ENCODE measurements at regions of chr11 and their contacts with region 1.

Region 1: DNA sequence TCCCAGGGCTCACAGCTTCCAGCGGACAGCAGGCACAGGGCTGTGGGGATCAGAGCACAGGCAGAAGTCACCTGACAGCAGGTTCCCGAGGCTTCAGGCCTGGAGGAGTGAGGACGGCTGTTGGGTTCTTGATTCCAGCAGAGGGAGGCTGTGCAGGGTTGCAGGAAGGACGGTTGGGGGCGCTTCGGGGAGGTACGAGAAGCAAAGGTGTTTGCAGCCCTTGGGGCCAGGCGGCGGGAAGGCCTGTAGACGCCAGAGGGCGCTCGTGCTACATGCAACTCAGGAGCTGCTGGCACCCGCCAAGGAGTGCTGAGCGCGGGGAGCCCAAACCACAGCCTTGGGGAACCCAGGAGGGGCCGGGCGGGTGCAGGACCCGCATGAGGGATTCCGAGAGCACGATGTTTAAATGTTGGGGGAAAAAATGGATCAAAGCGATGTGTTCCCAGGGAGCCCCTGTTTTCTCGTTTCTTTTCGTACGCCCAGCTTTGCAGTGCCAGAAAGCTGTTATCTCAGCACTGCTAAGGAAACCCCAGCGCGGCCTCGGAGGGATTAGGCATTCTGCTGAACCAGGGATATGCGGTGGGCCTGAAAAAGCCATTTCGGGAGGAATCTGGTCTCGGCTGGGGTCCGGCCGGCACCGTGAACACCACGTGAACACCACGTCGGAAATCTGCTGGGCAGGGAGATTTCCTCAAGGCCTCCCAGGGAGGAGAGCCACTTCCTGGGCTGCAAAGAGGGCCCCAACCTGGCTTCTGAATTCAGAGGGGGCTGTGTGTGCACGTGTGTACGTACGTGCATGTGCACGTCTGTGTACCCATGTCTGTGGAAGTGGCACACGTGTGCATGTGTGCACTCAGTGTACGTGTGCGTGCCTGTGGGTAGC is 88.1 kb downstream of the KCNQ1 start:
- DNase-seq: peak; percentile 93
- ATAC-seq: peak; percentile 88
- H3K4me3 Mint-ChIP-seq: peak overlapping the region; percentile 45
- H3K27ac Mint-ChIP-seq: no peak overlapping the region
- H3K4me1 Mint-ChIP-seq: peaks cover 19% of the 10 kb centered on the region
- H3K27me3 Mint-ChIP-seq: peaks cover 2% of the 10 kb centered on the region

Region 2: DNA sequence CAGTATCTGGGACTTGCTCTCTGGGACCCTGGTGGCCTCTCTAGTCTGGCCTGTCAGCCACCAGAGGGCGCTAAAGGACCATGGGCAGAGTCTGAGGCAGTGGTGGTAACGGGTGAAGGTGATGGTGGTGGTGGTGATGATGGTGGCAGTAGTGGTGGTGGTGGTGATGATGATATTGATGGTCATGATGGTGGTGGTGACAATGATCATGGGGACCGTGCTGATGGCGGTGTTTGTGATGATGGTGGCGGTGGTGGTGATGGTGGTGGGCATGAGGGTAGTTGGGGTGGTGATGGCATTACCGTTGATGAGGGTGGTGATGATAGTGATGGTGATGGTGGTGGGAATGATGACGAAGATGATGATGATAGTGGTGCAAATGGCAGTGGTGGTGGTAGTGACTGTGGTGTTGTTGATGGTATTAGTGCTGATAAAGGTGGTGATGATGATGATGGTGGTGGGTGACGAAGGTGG is 104.6 kb before region 1 on chr11:
- CTCF ChIA-PET with region 1: interaction called, 82 read pairs
- DNase-seq: peak; percentile 85
- ATAC-seq: peak; percentile 79
- H3K4me3 Mint-ChIP-seq: no peak overlapping the region
- H3K27ac Mint-ChIP-seq: no peak overlapping the region
- H3K4me1 Mint-ChIP-seq: no peaks in the 10 kb centered on the region
- H3K27me3 Mint-ChIP-seq: no peaks in the 10 kb centered on the region

Region 3: DNA sequence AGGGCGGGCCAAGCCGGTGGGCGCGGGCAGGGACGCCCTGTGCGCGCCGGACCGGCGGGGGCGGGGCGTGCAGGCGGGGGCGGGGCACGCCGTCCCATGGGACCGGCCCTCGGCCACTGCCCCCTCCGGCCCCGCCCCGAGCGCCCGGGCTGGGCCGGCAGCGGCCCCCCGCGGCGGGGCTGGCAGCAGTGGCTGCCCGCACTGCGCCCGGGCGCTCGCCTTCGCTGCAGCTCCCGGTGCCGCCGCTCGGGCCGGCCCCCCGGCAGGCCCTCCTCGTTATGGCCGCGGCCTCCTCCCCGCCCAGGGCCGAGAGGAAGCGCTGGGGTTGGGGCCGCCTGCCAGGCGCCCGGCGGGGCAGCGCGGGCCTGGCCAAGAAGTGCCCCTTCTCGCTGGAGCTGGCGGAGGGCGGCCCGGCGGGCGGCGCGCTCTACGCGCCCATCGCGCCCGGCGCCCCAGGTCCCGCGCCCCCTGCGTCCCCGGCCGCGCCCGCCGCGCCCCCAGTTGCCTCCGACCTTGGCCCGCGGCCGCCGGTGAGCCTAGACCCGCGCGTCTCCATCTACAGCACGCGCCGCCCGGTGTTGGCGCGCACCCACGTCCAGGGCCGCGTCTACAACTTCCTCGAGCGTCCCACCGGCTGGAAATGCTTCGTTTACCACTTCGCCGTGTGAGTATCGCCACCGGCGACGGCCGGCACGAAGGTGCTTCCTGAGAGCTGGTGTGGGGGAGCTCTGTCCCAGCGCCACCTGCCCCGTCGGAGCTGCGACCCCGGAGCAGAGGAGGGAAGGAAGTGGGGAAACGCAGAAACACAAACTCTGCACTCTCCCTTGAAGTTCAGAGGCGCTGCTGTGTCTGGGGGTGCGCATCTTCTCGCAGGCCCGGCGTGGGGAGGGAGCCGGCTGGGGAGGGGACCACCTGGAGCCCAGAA is 87.9 kb before region 1 on chr11 and contains the start of gene KCNQ1:
- CTCF ChIA-PET with region 1: interaction called, 15 read pairs
- DNase-seq: peak; percentile 57
- ATAC-seq: peak; percentile 79
- H3K4me3 Mint-ChIP-seq: peak within 1 kb of the TSS; percentile 74
- H3K27ac Mint-ChIP-seq: no peak within 1 kb of the TSS
- H3K4me1 Mint-ChIP-seq: peaks cover 30% of the 10 kb centered on the region
- H3K27me3 Mint-ChIP-seq: peaks cover 23% of the 10 kb centered on the region
- total RNA-seq, gene KCNQ1: 4.3 to 9.2 TPM

Region 4: GRCh38 chr11:2519862-2520735 is 12.8 kb before region 1 on chr11:
- CTCF ChIA-PET with region 1: interaction called, 11 read pairs
- DNase-seq: peak; percentile 39
- ATAC-seq: no peak
- H3K4me3 Mint-ChIP-seq: no peak overlapping the region
- H3K27ac Mint-ChIP-seq: no peak overlapping the region
- H3K4me1 Mint-ChIP-seq: no peaks in the 10 kb centered on the region
- H3K27me3 Mint-ChIP-seq: no peaks in the 10 kb centered on the region

Region 5: DNA sequence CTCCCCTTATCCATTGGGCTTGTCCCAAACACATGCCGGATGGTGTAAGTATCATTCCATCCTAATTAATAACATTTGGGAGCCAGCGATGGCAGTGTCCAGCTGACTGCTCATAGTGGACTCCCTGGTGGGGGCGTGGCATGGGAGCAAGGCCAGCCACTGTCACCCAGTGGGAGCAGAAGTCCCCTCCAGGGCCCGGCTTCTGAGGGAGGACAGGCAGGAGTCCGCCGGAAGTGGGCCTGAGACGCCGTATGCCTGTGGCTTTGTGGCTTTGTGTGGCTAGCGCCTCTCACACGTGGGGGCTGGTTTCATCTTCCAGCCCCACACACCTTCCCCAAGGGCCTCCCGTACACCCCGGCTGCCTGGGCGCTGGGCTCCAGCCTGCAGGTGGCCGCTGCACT is 36.4 kb after region 1 on chr11:
- CTCF ChIA-PET with region 1: no interaction called
- DNase-seq: no peak
- ATAC-seq: no peak
- H3K4me3 Mint-ChIP-seq: no peak overlapping the region
- H3K27ac Mint-ChIP-seq: no peak overlapping the region
- H3K4me1 Mint-ChIP-seq: peaks cover 1% of the 10 kb centered on the region
- H3K27me3 Mint-ChIP-seq: no peaks in the 10 kb centered on the region

Region 6: DNA sequence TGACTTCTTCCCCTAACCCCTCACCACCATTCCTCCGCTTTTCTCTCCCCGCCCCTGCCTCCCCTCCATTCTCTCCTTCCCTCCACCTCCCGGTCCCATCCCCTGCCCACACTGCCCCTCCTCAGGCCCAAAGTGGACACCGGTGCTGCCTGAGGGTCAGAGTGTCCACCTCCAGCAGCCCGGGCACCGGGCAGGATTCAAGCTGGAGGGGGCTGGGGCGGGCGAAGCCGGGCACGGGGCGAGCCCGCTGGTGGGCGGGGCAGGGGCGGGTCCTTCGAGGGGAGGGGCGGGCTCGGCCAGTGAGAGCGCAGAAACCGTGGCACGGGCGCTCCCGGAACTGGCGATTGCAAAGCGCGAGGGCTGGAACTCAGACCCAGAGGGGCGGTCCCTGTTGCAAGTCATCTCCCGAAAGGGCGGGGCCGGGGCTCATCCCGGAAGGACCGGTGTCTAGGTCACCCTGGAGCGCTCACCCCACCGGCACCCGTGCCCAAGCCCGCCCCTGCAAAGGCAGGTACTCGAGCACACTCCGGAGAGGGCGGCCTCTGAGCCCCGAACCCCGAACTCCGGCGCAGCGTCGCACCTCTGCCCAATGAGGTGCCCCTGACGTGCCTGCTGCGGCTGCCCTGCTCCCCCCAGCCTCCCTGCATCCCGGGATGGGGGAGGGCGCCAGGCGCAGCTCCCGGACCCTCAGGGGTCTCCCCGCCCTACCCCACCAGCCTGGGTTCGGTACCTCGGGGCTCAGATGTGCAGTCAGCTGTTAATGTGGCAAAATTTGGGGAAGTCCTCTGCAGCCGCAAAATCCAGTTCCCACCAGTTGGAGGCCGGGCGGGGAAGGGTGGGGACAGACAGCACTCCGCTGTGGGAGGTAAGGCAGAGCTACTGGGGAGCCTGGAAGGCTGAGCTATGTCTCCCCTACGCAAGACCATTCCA is 369.2 kb after region 1 on chr11:
- CTCF ChIA-PET with region 1: interaction called, 22 read pairs
- DNase-seq: peak; percentile 99
- ATAC-seq: peak; percentile 96
- H3K4me3 Mint-ChIP-seq: peak overlapping the region; percentile 68
- H3K27ac Mint-ChIP-seq: peak overlapping the region; percentile 72
- H3K4me1 Mint-ChIP-seq: peaks cover 36% of the 10 kb centered on the region
- H3K27me3 Mint-ChIP-seq: peaks cover 3% of the 10 kb centered on the region

Region 7: DNA sequence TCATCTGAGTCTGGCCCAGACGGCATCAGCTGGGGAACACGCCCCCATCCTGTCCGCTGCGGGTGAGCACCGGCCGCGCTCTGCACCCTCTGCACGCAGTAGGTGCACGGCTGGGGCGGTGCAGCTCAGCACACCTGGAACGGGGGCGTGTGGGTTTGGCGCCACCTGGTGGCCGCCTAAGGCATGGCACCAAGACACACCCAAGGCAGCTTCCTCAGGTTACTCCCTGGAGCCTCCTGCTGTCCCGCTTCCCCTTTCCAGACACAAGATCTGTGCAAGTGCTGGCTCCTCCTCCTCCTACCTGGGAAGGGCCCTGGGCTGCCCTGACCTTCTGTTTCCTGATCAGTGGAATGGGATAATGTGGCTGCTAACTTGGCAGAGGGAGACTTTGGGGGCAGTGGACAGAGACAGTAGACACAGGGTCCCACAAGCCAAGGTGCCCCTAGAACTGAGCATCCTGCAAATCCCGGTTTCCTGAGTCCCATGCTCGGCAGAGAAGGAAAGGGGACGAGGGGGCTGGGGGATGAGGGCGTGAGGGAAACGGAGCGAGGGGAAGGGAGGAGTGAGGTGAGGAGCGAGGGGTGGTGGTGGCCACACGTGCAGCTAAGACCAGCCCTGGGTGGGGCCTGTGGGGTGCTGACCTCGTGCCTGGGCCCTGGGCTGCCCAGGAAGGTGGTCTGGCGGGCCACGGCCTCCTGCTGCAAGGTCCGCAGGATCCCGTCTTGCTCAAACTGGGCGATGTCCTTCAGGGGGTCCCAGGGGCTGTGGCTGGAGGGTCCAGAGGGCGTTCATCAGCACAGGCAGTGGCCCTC is 559.1 kb after region 1 on chr11:
- CTCF ChIA-PET with region 1: interaction called, 64 read pairs
- DNase-seq: peak; percentile 83
- ATAC-seq: peak; percentile 92
- H3K4me3 Mint-ChIP-seq: no peak overlapping the region
- H3K27ac Mint-ChIP-seq: no peak overlapping the region
- H3K4me1 Mint-ChIP-seq: peaks cover 6% of the 10 kb centered on the region
- H3K27me3 Mint-ChIP-seq: peaks cover 3% of the 10 kb centered on the region